ENCODE measurements at regions of chr12 and their contacts with region 1.

Region 1: DNA sequence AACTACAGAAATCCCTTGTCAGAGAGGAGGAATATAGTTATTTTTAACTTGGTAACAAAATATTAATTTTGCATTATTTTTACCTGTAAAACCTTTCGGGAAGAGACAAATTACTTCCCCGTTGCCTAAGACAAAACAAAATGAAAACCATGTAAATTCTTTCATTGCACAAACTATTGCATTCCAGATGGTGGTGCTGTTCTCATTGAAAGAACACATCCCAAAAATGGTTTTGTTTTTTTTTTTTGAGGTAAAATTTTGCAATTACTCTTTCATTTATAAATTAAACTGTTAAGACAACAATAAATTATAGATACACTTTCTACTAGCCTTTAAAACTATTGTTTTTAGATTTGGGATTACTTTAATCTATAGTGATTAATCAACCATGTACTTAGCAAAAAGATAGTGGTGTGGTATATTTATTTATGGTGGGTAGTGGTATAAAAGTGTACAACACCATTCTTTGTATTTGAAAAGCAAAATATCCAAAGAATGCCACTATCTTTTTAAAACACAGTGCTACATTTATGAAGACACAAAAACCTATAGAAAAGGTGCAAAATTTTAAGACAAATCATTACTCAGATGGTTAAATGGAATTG is 115.5 kb downstream of the SLC38A1 start:
- DNase-seq: no peak
- H3K4me3 Mint-ChIP-seq: no peak overlapping the region
- H3K27ac Mint-ChIP-seq: no peak overlapping the region
- H3K4me1 Mint-ChIP-seq: peaks cover 12% of the 10 kb centered on the region
- H3K27me3 Mint-ChIP-seq: peaks cover under 1% of the 10 kb centered on the region

Region 2: DNA sequence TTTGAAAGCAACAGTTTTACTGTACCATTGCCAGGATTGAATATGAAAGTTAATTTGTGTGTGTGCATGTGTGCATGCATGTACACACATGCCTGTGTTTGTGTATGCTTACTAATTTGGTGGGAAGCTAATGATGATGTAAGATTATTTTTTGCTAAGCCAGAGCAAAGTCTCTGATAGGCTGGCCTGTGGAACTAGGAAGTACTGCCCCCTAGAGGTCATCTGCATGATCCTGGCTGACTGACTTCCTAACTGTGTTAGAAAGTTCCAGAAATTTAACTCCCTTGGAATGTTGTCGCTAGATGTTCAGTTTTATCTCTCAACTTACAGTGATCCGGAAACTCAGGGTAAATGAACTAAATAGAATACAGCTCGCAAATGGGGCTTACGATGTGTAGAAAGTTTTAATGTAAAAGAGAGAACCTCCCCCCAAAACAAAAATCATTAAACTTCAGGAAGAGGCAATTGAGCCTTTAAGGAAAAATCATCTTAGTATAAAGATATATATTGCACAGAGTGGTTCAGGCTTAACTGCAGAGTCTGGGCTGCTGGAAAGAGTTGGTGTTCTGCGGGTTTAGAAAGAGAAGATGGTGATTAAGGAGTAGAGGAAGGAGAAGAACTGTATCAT is 149.8 kb after region 1 on chr12:
- CTCF ChIA-PET with region 1: interaction called, 9 read pairs
- intact Hi-C with region 1: loop called (anchors 1 kb)
- DNase-seq: peak; percentile 66
- H3K4me3 Mint-ChIP-seq: no peak overlapping the region
- H3K27ac Mint-ChIP-seq: no peak overlapping the region
- H3K4me1 Mint-ChIP-seq: peaks cover 8% of the 10 kb centered on the region
- H3K27me3 Mint-ChIP-seq: no peaks in the 10 kb centered on the region

Region 3: DNA sequence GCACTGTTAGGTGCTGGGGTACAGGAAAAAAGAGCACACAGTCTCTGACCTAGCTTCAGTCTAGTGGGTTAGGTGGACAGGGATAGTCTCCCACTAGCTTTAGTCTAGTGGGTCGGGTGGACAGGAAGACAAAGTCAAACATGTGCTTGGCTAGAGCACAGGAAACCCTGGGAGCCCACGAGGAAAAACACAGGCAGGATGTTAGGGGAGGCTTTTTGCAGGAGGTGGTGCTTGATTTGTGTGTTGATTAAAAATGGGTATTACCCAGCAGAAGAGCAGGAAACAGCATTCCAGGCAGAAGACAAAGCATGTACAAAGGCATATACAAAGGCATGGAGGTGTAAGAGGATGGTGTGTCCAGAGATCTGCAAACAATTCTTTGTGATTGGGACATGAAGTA is 195.9 kb after region 1 on chr12:
- CTCF ChIA-PET with region 1: no interaction called
- intact Hi-C with region 1: loop called (anchors 5 kb)
- DNase-seq: no peak
- H3K4me3 Mint-ChIP-seq: no peak overlapping the region
- H3K27ac Mint-ChIP-seq: no peak overlapping the region
- H3K4me1 Mint-ChIP-seq: peaks cover 8% of the 10 kb centered on the region
- H3K27me3 Mint-ChIP-seq: no peaks in the 10 kb centered on the region

Region 4: DNA sequence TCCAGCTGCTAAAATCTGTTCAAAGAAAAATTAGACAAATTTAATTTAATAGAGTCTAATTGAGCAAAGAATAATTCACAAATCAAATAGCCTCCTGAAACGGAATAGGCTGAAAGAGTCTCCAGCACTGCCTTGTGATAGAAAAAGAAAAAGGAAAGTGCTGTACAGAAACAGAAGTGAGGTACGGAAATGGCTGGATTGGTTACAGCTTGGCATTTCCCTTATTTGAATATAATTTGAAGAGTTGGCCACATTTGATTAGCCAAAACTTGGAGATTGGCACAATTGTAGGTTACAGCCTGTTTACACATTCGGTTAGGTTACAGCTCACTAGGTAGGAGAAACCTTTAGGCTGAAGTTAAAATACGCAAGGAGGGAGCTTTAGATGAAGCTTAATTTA is 901.3 kb after region 1 on chr12:
- CTCF ChIA-PET with region 1: no interaction called
- intact Hi-C with region 1: no loop called
- DNase-seq: no peak
- H3K4me3 Mint-ChIP-seq: no peak overlapping the region
- H3K27ac Mint-ChIP-seq: no peak overlapping the region
- H3K4me1 Mint-ChIP-seq: no peaks in the 10 kb centered on the region
- H3K27me3 Mint-ChIP-seq: no peaks in the 10 kb centered on the region